H1 (cell line): ENCODE measurements at regions of chr4 and their contacts with region 1.

Region 1: DNA sequence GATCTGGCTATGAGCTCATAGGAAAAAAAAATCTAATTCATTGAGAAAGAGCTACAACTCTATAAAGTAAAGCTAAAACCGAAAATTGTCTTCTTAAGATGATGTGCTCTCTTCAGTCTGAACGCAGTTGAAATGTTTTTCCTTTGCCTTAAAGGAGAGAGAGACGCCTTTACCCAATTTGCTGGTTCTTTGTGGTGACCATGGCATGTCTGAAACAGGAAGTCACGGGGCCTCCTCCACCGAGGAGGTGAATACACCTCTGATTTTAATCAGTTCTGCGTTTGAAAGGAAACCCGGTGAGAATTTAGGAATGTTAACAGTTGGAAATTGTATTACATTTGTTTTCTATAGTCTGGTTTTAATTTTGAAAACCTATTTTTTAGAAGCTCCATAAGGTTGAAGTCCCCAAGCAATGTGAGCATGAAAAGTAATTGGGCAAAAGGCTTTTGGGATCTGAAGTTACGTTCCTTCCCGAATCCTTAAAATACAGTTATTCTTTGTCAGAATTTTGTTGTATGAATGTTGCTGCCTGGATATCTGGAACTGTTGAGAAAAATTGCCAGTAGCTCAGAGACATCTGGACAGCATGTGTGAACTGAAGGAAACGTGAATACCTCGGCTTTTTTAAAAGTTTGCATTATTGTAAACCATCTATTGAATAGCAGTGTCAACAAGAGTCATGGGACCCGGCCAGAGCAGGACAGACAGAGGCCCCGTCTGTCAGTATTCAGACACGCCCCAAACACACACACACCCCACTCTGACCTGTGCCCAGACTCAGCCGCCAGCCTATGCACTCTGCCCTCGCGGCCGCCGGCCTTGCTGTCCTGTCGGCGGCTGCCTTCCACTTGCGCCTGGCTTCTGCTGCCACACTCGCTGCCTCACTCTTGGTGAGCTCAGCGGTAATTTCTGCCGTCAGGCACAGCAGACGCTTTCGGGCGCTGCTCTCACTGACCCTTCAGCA is 9.9 kb downstream of the PIGG start:
- DNase-seq: no peak
- H3K4me3 ChIP-seq: no peak overlapping the region
- H3K27ac ChIP-seq: no peak overlapping the region
- H3K4me1 ChIP-seq: no peaks in the 10 kb centered on the region
- H3K27me3 ChIP-seq: no peaks in the 10 kb centered on the region
- CTCF ChIP-seq: no peak
- EP300 ChIP-seq: no peak
- POLR2A ChIP-seq: no peak
- RAD21 ChIP-seq: no peak

Region 2: DNA sequence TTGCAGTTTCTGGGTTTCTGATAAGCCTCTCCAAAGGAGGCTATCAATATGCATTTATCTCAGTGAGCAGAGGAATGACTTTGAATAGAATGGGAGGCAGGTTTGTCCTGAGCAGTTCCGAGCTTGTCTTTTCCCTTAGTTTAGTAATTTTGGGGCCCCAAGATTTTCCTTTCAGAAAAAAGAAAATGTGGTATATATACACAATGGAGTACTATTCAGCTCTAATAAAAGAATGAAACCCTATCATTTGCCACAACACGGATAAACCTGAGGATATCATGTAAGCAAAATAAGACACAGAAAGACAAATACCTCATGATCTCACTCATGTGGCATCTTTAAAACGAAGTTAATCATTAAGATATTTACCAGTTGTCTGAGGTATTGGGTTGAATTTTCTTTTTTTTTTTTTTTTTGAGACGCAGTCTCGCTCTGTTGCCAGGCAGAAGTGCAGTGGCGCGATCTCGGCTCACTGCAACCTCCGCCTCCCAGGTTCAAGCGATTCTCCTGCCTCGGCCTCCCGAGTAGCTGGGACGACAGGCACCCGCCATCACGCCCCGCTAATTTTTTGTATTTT is 10.5 kb before region 1 on chr4:
- CTCF ChIA-PET with region 1: interaction called, 3 read pairs
- POLR2A ChIA-PET with region 1: interaction called, 12 read pairs
- DNase-seq: no peak
- H3K4me3 ChIP-seq: peak overlapping the region; percentile 74 to 87 (median 85)
- H3K27ac ChIP-seq: peak overlapping the region; percentile 80
- H3K4me1 ChIP-seq: peaks cover 0 to 8% (median 4%) of the 10 kb centered on the region in 4 experiments; a peak in 3 of 7 replicates
- H3K27me3 ChIP-seq: no peaks in the 10 kb centered on the region
- CTCF ChIP-seq: no peak
- EP300 ChIP-seq: no peak
- POLR2A ChIP-seq: no peak
- RAD21 ChIP-seq: no peak

Region 3: GRCh38 chr4:519203-519651 is 10.3 kb after region 1 on chr4:
- CTCF ChIA-PET with region 1: interaction called, 3 read pairs
- POLR2A ChIA-PET with region 1: interaction called, 30 read pairs
- DNase-seq: no peak
- H3K4me3 ChIP-seq: no peak overlapping the region
- H3K27ac ChIP-seq: no peak overlapping the region
- H3K4me1 ChIP-seq: no peaks in the 10 kb centered on the region
- H3K27me3 ChIP-seq: no peaks in the 10 kb centered on the region
- CTCF ChIP-seq: no peak
- EP300 ChIP-seq: no peak
- POLR2A ChIP-seq: no peak
- RAD21 ChIP-seq: no peak

Region 4: GRCh38 chr4:749698-750666 is 241.0 kb after region 1 on chr4:
- CTCF ChIA-PET with region 1: no interaction called
- POLR2A ChIA-PET with region 1: no interaction called
- DNase-seq: no peak
- H3K4me3 ChIP-seq: no peak overlapping the region
- H3K27ac ChIP-seq: no peak overlapping the region
- H3K4me1 ChIP-seq: no peaks in the 10 kb centered on the region
- H3K27me3 ChIP-seq: no peaks in the 10 kb centered on the region
- CTCF ChIP-seq: no peak
- EP300 ChIP-seq: no peak
- POLR2A ChIP-seq: no peak
- RAD21 ChIP-seq: no peak